ENCODE measurements at regions of chr2 and their contacts with region 1.

Region 1: DNA sequence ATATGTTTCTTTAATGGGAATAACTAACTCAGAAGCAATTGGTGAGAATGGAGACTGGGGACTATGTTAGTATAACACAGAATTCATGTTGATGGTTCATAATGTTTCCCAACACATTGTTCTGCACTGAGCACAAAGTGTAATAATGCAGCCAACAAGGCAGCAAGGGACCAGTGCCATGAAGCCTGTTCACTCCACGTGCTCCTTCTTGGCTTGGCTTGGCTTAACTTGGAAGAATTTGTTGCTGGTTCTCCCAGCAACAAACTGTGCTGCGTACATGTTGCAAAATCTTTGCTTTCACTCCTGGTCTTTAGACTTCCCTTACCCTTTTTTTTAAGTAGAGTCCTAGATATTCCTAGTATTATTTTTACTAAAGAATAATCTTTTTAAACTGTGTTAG is 129.7 kb downstream of the MAP3K20 start:
- DNase-seq: no peak
- H3K4me3 ChIP-seq: no peak overlapping the region
- H3K27ac ChIP-seq: no peak overlapping the region
- H3K4me1 ChIP-seq: no peaks in the 10 kb centered on the region
- CTCF ChIP-seq: no peak

Region 2: GRCh38 chr2:173448938-173449471 is 243.6 kb after region 1 on chr2:
- CTCF ChIA-PET with region 1: no interaction called
- POLR2A ChIA-PET with region 1: no interaction called
- intact Hi-C with region 1: loop called (anchors 5 kb)
- DNase-seq: peak; percentile 59
- H3K4me3 ChIP-seq: no peak overlapping the region
- H3K27ac ChIP-seq: no peak overlapping the region
- H3K4me1 ChIP-seq: no peaks in the 10 kb centered on the region
- CTCF ChIP-seq: peak; percentile 79

Region 3: GRCh38 chr2:173588931-173589369 is 383.6 kb after region 1 on chr2:
- CTCF ChIA-PET with region 1: no interaction called
- POLR2A ChIA-PET with region 1: no interaction called
- intact Hi-C with region 1: no loop called
- DNase-seq: no peak
- H3K4me3 ChIP-seq: no peak overlapping the region
- H3K27ac ChIP-seq: no peak overlapping the region
- H3K4me1 ChIP-seq: no peaks in the 10 kb centered on the region
- CTCF ChIP-seq: no peak

Region 4: GRCh38 chr2:174166281-174166680 is 960.9 kb after region 1 on chr2:
- CTCF ChIA-PET with region 1: no interaction called
- POLR2A ChIA-PET with region 1: no interaction called
- intact Hi-C with region 1: no loop called
- DNase-seq: no peak
- H3K4me3 ChIP-seq: no peak overlapping the region
- H3K27ac ChIP-seq: no peak overlapping the region
- H3K4me1 ChIP-seq: no peaks in the 10 kb centered on the region
- CTCF ChIP-seq: no peak

Region 5: DNA sequence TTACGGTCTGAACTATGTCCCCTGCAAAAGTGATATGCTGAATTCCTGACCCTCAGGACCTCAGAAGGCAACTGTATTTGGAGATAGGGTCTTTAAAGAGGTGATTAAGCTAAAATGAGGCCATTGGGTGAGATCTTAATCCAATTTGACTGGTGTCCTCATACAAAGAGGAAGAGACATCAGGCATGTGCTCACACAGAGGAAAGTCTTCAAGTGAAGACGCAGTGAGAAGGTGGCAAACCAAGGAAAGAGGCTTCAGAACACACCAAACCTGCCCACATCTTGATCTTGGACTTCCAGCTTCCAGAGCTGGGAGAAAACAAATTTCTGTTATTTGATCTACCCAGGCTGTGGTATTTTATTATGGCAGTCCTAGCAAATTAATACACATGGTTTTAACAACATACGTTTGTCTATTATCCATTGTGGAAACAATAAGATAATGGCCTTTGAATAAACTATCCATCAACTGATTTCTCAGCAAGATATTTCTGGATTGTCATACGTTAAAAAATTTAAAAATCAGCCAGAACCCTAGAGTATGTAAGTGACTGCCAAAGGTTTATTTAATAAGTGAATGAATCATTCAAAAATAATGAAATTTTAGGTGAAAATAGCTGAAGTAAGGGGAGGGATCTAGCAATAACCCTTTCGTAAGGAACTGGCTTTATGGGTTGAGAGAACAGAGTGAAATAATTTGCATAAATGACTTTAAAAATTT is 1385.7 kb after region 1 on chr2:
- CTCF ChIA-PET with region 1: no interaction called
- POLR2A ChIA-PET with region 1: no interaction called
- intact Hi-C with region 1: no loop called
- DNase-seq: no peak
- H3K4me3 ChIP-seq: no peak overlapping the region
- H3K27ac ChIP-seq: peak overlapping the region; percentile 7
- H3K4me1 ChIP-seq: peaks cover 55% of the 10 kb centered on the region
- CTCF ChIP-seq: no peak

Measured in OCI-LY7 (cell line).